ENCODE measurements at regions of chr22 and their contacts with region 1.

Region 1: DNA sequence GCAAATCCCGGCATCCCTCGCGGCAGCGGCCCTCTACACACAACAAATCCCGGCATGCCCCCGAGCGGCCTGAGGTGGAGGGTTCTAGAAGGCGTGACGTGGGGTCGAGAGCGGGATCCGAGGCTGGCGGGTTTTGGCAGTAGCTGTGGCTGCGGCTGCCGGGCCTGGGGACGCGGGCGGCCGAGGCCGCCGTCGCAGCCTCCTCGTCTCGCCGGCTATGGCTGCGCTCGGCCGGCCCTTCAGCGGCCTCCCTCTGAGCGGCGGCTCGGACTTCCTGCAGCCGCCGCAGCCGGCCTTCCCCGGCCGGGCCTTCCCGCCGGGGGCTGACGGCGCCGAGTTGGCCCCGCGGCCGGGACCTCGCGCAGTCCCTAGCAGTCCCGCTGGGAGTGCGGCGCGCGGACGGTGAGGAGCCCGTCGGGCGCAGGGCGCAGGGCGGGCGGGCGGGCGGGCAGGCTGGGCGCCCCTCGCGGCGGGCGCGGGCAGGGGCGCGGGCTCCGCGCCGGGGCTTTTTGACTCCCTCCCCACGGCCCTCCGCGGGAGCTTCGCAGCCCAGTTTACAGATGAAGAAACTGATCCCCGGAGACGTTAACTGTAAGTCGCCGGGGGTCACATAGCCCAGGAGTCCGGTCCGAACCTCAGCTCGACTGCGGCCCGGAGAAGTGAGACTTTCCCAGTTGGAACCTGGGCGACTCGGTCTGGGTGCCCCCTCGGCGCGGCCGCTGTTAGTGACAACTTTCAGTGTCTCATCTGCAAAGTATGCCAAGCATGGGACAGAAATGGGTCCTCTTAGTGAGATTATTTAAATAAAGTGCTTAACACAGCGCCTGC is at the start of gene CCDC117:
- DNase-seq: peak; percentile 90
- ATAC-seq: peak; percentile 92
- H3K4me3 ChIP-seq: peak within 1 kb of the TSS; percentile 71 to 87 (median 82)
- H3K27ac ChIP-seq: peak within 1 kb of the TSS; percentile 91
- H3K4me1 ChIP-seq: peaks cover 82% of the 10 kb centered on the region
- H3K27me3 ChIP-seq: no peaks in the 10 kb centered on the region; a peak in 1 of 5 replicates
- CTCF ChIP-seq: 0 out of 2 replicates have a peak, but pooled peaks have one; percentile 12
- EP300 ChIP-seq: peak in 1 of 2 experiments; percentile 72; a peak in 1 of 4 replicates
- POLR2A ChIP-seq: peak; percentile 72 to 80
- RAD21 ChIP-seq: peak; percentile 66; the same call in 1 of the 2 replicates
- total RNA-seq, gene CCDC117: 34.2 and 43.8 TPM in 2 replicates

Region 2: DNA sequence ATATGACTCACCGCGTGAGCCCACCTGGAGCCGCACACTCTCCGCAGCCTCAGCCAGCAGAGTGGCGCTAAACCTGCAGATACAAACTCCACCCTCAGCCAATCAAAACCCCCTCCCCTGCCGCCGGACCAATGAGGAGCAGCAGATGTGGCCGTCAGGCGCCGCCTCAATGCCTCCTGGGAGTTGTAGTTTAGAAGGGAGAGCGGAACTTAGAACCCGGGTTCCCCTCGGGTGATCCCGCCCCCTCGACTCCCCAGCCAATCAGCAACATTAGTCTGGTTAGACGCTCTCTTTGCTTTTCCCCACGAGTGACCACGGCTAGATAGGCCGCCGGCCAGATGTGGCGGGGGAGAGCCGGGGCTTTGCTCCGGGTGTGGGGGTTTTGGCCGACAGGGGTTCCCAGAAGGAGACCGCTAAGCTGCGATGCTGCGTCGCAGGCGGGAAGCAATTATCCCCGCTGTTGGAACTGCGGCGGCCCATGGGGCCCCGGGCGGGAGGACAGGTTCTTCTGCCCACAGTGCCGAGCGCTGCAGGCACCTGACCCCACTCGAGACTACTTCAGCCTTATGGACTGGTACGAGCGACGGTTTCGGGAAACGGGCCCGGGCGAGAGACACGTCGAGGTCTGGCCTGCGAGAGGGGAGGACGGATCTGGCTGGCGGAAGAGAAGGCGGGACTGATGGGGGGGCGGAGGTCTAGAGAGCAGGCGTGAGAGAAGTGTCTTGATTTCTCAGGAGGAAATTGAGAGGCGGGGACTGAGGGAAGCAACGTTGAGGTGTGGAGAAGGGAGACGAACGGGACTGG is 30.9 kb before region 1 on chr22 and contains the starts of genes CHEK2 and HSCB:
- CTCF ChIA-PET with region 1: no interaction called
- POLR2A ChIA-PET with region 1: interaction called, 12 read pairs
- in situ Hi-C with region 1: no loop called
- intact Hi-C with region 1: loop called (anchors 1 kb)
- DNase-seq: peak; percentile 98
- ATAC-seq: peak; percentile 97
- H3K4me3 ChIP-seq: peak within 1 kb of the TSS; percentile 78 to 96 (median 92)
- H3K27ac ChIP-seq: peak within 1 kb of the TSS; percentile 79
- H3K4me1 ChIP-seq: peaks cover 76% of the 10 kb centered on the region
- H3K27me3 ChIP-seq: no peaks in the 10 kb centered on the region
- CTCF ChIP-seq: peak; percentile 52
- EP300 ChIP-seq: no peak
- POLR2A ChIP-seq: peak; percentile 47 to 75; a peak in 3 of 4 replicates
- RAD21 ChIP-seq: no peak
- total RNA-seq, gene CHEK2: 40.5 and 53.3 TPM in 2 replicates
- total RNA-seq, gene HSCB: 20.2 and 20.9 TPM in 2 replicates

Region 3: DNA sequence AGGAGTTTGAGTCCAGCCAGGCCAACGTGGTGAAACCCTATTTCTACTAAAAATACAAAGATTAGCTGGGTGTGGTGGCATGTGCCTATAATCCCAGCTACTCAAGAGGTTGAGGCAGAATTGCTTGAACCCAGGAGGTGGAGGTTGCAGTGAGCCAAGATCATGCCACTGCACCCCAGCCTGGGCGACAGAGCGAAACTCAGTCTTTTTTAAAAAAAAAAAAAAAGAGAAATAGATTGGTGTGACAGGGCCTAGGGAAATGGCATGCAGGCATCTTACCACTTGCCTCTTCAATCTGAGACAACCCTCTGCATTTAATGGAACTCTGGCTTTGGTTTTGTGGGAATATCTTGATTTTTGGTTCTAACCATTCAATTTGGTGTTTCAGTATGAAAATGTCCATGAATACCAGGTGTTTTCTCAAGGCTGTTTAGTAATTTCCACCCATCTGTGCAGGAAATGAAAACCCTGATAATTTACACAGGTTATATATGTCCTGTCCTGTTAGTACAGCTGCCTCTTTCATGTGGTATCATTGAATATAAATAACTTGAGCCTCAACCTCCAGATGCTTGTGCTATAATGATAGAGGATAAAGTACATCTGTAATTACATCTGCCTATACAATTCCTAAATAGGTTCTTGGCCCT is 19.1 kb after region 1 on chr22:
- CTCF ChIA-PET with region 1: no interaction called
- POLR2A ChIA-PET with region 1: interaction called, 13 read pairs
- in situ Hi-C with region 1: no loop called
- intact Hi-C with region 1: no loop called
- DNase-seq: no peak
- ATAC-seq: peak; percentile 36
- H3K4me3 ChIP-seq: no peak overlapping the region
- H3K27ac ChIP-seq: peak overlapping the region; percentile 54
- H3K4me1 ChIP-seq: peaks cover 52% of the 10 kb centered on the region
- H3K27me3 ChIP-seq: no peaks in the 10 kb centered on the region
- CTCF ChIP-seq: no peak
- EP300 ChIP-seq: no peak
- POLR2A ChIP-seq: no peak
- RAD21 ChIP-seq: no peak

Region 4: DNA sequence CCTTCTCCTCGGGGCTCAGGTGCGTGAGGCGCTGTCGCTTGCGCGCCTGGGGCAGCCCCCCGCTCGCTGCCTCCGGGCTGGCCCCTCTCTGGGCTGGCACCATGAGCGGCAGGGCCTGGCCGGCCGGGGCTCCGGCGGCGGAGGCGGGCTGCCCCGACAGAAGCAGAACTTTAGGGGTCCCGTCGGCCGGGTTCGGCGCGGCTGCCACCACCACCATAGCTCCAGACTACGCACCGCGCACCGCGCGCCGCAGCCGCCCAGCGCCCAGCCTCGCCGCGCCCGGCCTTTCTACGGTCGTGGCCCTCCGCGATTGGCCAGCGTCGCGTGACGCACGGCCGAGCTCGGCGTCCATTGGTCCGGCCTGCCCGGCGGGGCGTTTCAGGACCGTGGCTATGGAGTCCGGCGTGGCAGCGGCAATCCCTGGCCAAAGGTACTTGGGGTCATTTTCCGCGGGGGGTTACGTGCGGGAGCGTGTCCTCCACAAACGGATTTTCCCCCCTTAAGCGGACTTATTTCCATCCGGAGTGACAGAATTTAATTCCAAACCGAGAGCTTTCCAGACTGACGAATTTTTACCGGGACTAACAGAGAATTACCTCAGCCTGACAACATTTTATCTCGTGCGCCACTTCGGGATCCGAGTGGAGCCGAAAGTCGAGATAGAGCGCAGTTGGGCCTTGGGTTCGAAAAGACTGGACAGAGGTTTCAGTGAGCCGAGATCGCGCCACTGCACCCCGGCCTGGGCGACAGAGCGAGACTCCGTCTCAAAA is 27.6 kb after region 1 on chr22 and contains the start of gene XBP1:
- CTCF ChIA-PET with region 1: no interaction called
- POLR2A ChIA-PET with region 1: interaction called, 33 read pairs
- in situ Hi-C with region 1: no loop called
- intact Hi-C with region 1: no loop called
- DNase-seq: peak; percentile 89
- ATAC-seq: peak; percentile 95
- H3K4me3 ChIP-seq: peak within 1 kb of the TSS; percentile 66 to 99 (median 82)
- H3K27ac ChIP-seq: peak within 1 kb of the TSS; percentile 98
- H3K4me1 ChIP-seq: peaks cover 42% of the 10 kb centered on the region
- H3K27me3 ChIP-seq: no peaks in the 10 kb centered on the region; a peak in 1 of 5 replicates
- CTCF ChIP-seq: no peak
- EP300 ChIP-seq: no peak
- POLR2A ChIP-seq: peak; percentile 91 to 98
- RAD21 ChIP-seq: peak; percentile 49; the same call in 1 of the 2 replicates
- total RNA-seq, gene XBP1: 313 and 427 TPM in 2 replicates

Measured in HepG2 (cell line).